ENCODE measurements at regions of chr9 and their contacts with region 1.

Region 1: DNA sequence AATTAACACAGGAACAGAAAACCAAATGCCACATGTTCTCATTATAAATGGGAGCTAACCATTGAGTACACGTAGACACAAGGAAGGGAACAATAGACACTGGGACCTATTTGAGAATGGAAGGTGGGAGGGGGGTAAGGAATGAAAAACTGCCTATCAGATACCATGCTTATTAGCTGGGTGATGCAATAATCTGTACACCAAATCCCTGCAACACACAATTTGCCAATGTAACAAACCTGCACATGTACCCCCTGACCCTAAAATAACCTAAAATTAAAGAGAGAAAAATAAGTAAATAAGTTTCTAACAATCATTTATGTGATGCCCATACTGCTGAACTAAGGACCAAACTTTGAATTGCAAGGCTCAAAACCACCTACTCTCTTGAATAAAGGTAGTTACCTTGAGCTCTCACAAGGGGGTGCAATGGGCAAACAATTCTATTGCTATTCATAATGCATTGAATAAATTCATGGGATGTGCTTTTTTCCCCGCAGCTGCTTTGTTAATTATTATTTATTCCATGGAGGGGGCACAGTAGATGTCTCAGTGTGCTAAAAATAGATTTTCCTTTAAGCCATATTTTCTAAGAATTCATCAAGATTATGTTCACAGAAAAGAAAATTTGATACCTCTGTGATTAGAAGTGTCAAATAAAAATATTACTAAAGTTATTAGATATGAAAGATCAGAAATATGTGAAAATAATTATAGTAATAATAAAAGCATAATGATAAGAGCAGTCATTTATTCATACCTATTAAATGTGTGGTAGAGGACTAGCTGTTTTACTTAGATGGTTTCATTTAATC is 76.2 kb upstream of the PTPN3 start:
- DNase-seq: peak; percentile 33
- H3K4me3 ChIP-seq: no peak overlapping the region
- H3K27ac ChIP-seq: no peak overlapping the region
- H3K4me1 ChIP-seq: no peaks in the 10 kb centered on the region
- H3K27me3 ChIP-seq: no peaks in the 10 kb centered on the region
- CTCF ChIP-seq: peak; percentile 45 to 78 (median 69)
- POLR2A ChIP-seq: no peak

Region 2: GRCh38 chr9:109817846-109818472 is 243.7 kb after region 1 on chr9:
- intact Hi-C with region 1: loop called (anchors 2 kb)
- DNase-seq: peak; percentile 82
- H3K4me3 ChIP-seq: no peak overlapping the region
- H3K27ac ChIP-seq: no peak overlapping the region
- H3K4me1 ChIP-seq: no peaks in the 10 kb centered on the region
- H3K27me3 ChIP-seq: no peaks in the 10 kb centered on the region
- CTCF ChIP-seq: peak; percentile 82 to 94 (median 84)
- POLR2A ChIP-seq: no peak

Region 3: DNA sequence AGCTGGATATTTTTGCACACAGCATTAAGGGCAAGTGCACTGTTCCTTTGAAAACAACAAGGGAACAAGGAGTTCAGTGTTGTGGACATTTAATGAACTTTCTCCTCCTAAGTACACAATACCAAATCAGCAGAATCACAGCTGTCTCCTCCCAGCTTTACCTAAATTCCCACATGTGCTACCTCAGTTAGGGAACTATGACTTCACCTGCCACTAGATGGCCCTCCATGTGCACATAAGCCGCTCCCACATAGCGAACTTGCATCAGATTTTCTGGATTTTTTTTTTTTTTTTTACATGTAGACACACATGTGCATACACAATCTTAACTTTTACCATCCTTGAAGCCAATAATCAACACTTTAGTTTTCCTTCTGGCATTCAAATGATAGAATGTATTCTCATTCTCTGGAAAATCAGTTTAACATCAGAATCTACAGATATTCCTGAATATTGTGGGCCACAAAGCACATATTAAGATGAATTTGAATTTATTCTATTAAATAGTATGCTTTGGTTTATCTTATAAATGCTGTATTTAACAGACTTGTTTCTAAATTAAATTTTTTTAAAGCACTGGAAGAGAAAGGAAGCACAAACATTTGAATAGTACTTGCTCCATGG is 329.4 kb after region 1 on chr9:
- intact Hi-C with region 1: loop called (anchors 5 kb)
- DNase-seq: peak; percentile 55
- H3K4me3 ChIP-seq: no peak overlapping the region
- H3K27ac ChIP-seq: no peak overlapping the region
- H3K4me1 ChIP-seq: no peaks in the 10 kb centered on the region
- H3K27me3 ChIP-seq: no peaks in the 10 kb centered on the region
- CTCF ChIP-seq: peak; percentile 63 to 76 (median 70)
- POLR2A ChIP-seq: no peak

Region 4: GRCh38 chr9:109918339-109919163 is 344.3 kb after region 1 on chr9:
- intact Hi-C with region 1: no loop called
- DNase-seq: no peak
- H3K4me3 ChIP-seq: no peak overlapping the region
- H3K27ac ChIP-seq: no peak overlapping the region
- H3K4me1 ChIP-seq: no peaks in the 10 kb centered on the region
- H3K27me3 ChIP-seq: no peaks in the 10 kb centered on the region
- CTCF ChIP-seq: no peak
- POLR2A ChIP-seq: no peak

Region 5: GRCh38 chr9:110152704-110153374 is 578.6 kb after region 1 on chr9:
- intact Hi-C with region 1: loop called (anchors 5 kb)
- DNase-seq: no peak
- H3K4me3 ChIP-seq: no peak overlapping the region
- H3K27ac ChIP-seq: no peak overlapping the region
- H3K4me1 ChIP-seq: no peaks in the 10 kb centered on the region
- H3K27me3 ChIP-seq: no peaks in the 10 kb centered on the region
- CTCF ChIP-seq: peak; percentile 30 to 66 (median 65)
- POLR2A ChIP-seq: no peak

Region 6: DNA sequence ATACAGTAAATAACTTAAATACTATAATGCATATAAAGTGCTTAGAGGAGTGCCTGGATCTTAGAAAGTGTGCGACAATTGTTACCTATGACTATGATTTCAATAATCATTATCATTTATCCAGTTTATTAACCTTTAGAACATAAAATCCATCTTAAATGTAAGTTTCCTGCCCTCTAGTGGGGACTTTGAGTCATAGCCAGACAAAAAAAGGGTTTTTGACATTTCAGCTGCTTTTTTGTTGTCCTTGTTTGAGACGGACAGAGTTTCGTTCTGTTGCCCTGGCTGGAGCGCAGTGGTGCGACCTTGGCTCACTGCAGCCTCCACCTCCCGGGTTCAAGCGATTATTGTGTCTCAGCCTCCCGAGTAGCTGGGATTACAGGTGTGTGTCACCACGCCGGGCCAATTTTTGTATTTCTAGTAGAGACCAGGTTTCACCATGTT is 643.4 kb after region 1 on chr9:
- intact Hi-C with region 1: loop called (anchors 5 kb)
- DNase-seq: peak; percentile 14
- H3K4me3 ChIP-seq: no peak overlapping the region
- H3K27ac ChIP-seq: no peak overlapping the region
- H3K4me1 ChIP-seq: no peaks in the 10 kb centered on the region
- H3K27me3 ChIP-seq: no peaks in the 10 kb centered on the region
- CTCF ChIP-seq: peak; percentile 69 to 89 (median 81)
- POLR2A ChIP-seq: no peak

Measured in prostate gland (tissue), 2 donors.